AG04450 (cell line): ENCODE measurements at regions of chr12 and their contacts with region 1.

Region 1: DNA sequence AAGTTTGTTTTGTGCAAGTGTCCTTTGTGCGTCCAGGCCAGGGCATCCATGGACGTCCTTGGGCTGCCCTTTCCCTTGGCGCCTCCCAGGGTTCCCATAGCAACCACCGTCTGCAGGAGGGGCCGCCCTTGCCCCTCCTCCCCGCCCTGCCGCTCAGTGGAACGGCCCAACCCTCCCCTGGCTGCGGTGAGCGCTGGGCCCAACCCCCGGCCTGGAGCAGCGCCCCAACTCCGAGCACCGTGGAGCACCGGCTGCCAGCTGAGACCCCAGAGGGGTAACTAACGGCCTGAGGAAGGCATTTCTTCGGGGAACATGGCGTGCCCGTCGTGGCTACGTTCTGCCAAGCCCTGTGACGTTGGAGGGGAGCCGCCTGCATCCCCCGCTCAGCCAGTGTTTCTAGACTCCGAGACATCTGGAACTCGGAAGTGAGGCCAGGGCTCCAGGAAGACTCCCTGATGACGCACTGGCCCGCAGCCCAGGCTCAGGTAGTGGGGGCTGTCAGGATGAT is 5.3 kb upstream of the ACACB start:
- DNase-seq: no peak
- H3K4me3 ChIP-seq: peak overlapping the region; percentile 71
- H3K27ac ChIP-seq: peak overlapping the region; percentile 81
- H3K27me3 ChIP-seq: no peaks in the 10 kb centered on the region
- CTCF ChIP-seq: no peak

Region 2: DNA sequence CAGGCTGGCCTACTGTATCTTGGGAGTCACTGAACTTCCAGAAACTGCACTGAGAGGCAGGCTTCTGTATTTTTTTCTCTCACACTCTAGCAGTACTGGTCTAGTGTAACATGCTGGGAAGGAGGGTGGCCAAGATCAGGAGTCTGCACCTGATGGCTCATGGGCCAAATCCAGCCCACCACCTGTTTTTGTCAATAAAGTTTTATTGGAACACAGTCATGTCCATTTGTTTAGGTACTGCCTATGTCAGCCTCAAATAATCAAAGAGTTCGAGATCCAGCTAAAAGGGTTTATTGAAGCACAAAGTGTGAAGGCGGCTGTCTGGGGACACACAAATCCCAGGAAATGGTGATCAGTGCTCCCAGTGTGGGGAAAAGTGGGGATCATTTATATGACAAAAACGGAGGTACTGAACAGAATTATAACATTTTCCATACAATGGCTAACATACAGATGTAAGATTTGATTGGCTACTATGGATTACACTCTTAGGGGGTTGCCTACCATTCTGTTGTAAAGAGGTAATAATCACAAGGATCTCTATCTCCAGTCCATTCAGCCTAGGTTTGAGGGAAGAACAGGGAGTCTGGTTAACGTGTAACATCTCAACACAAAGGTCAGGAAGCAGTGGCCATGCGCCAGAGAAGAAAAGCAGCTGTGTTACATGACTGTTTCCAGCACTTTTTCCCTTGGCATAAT is 45.7 kb before region 1 on chr12:
- CTCF ChIA-PET with region 1: interaction called, 10 read pairs
- POLR2A ChIA-PET with region 1: no interaction called
- DNase-seq: no peak
- H3K4me3 ChIP-seq: no peak overlapping the region
- H3K27ac ChIP-seq: no peak overlapping the region
- H3K27me3 ChIP-seq: no peaks in the 10 kb centered on the region
- CTCF ChIP-seq: no peak

Region 3: DNA sequence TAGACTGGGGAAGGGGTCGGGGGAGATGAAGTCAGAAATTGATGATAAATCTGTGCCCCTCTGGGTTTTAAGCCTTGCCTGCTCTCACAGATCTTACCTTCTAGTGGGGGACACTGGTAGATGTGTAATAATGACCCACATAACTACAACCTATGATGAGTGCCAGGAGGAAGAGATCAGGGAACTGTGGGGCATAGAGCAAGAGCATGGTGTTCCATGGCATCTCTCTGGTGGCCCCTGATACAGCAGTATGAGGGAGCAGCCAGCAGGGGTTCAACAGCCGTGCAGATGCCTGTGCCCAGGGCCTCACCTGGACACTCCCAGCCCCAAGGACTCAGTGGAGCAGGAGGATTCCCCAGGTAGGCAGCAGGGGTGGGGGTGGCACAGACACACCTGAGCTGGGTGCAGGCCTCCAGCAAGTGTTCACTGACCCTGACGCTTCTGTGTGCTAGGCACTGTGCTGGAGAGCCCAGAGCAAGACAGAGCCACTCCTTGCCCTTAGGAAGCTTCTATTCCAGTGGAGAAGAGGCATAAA is 10.4 kb after region 1 on chr12:
- CTCF ChIA-PET with region 1: interaction called, 25 read pairs
- POLR2A ChIA-PET with region 1: no interaction called
- DNase-seq: no peak
- H3K4me3 ChIP-seq: no peak overlapping the region
- H3K27ac ChIP-seq: no peak overlapping the region
- H3K27me3 ChIP-seq: no peaks in the 10 kb centered on the region
- CTCF ChIP-seq: no peak

Region 4: GRCh38 chr12:109134186-109134917 is 23.3 kb after region 1 on chr12:
- CTCF ChIA-PET with region 1: interaction called, 25 read pairs
- POLR2A ChIA-PET with region 1: no interaction called
- DNase-seq: no peak
- H3K4me3 ChIP-seq: no peak overlapping the region
- H3K27ac ChIP-seq: no peak overlapping the region
- H3K27me3 ChIP-seq: peaks cover 4% of the 10 kb centered on the region
- CTCF ChIP-seq: peak; percentile 69

Region 5: DNA sequence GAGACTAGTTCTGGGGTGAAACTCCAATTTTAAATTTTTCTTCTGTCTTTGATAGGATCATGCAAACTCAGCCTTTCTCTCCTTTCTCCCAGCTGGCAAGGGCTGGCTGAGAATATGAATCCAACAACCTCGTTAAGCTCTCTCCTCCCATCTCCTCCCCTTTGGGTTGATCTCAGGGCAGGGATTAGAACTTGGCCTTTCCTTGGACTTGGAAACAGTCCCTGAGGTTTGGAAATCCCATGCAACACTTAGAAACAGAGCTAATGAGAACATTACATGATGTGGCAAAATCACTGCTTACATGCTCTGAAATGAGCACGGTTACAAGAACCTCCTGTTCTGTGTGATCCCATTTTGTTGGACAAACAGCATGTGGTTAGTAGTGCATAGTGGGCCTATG is 36.9 kb after region 1 on chr12:
- CTCF ChIA-PET with region 1: interaction called, 20 read pairs
- POLR2A ChIA-PET with region 1: interaction called, 4 read pairs
- DNase-seq: no peak
- H3K4me3 ChIP-seq: no peak overlapping the region
- H3K27ac ChIP-seq: no peak overlapping the region
- H3K27me3 ChIP-seq: peaks cover 19% of the 10 kb centered on the region
- CTCF ChIP-seq: no peak

Region 6: GRCh38 chr12:109182041-109182839 is 71.2 kb after region 1 on chr12:
- CTCF ChIA-PET with region 1: interaction called, 11 read pairs
- POLR2A ChIA-PET with region 1: no interaction called
- DNase-seq: no peak
- H3K4me3 ChIP-seq: no peak overlapping the region
- H3K27ac ChIP-seq: no peak overlapping the region
- H3K27me3 ChIP-seq: no peaks in the 10 kb centered on the region
- CTCF ChIP-seq: no peak

Region 7: DNA sequence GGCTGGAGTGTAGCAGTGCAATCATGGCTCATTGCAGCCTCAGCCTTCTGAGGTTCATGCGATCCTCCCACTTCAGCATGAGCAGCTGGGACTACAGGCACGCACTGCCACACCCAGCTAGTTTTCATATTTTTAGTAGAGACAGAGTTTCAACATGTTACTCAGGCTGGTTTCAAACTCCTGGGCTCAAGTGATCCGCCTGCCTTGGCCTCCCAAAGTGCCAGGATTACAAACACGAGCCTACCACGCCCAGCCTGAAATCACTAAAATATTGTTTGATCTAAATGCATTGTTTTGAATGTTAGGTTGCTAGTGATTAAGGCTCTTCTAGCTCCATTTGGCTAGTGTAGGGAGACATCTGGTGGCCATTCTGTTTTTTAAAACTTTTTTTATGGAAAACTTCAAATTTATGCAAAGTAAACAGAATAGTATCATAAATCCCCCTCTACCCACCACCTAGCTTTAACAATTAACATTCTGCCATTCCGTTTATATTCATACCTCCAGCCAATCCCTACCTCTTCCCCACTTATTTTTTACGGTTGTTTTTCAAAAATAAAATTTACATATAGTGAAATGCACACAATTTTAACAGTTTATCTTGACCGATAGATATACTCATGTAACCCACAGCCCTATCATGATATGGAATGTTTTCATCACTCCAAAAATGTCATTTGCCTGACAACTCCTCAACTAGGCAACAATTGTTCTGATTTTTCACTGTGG is 274.5 kb after region 1 on chr12:
- CTCF ChIA-PET with region 1: interaction called, 33 read pairs
- POLR2A ChIA-PET with region 1: no interaction called
- DNase-seq: peak; percentile 3
- H3K4me3 ChIP-seq: no peak overlapping the region
- H3K27ac ChIP-seq: no peak overlapping the region
- H3K27me3 ChIP-seq: peaks cover 5% of the 10 kb centered on the region
- CTCF ChIP-seq: peak; percentile 65

Region 8: GRCh38 chr12:109592905-109593272 is 481.8 kb after region 1 on chr12:
- CTCF ChIA-PET with region 1: no interaction called
- POLR2A ChIA-PET with region 1: no interaction called
- DNase-seq: no peak
- H3K4me3 ChIP-seq: no peak overlapping the region
- H3K27ac ChIP-seq: no peak overlapping the region
- H3K27me3 ChIP-seq: no peaks in the 10 kb centered on the region
- CTCF ChIP-seq: no peak